ENCODE measurements at regions of chr20 and their contacts with region 1.

Region 1: DNA sequence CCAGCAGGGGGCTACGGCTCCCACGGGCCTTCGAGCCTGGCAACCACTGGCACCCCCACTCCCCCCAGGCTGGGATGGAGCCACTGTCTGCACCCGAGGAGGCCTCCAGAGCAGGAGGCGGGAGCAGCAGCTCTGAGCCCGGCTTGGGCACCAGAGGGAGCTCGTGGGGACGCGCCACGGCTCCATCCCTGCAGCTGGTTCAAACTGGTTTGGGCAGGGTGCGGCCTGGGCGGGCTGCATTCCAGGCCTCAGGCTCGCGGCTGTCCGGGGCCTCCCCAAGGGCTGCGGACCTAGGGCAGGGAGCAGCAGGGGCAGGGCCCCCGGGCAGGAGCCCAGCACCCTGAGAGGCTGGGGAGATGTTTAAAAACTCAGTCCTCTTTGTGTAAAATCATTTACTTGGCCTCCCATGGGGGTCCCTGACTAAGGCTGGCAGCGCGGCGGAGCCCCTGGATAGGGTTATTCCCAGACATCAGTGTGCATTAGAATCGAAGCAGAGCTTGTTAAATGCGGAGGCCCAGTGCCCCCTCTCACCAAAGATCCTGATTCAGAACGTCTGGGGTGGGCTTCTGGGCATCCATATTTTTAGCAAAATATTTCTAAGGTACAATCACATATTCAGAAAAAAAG is 4.1 kb upstream of the BCAS4 start:
- DNase-seq: no peak
- H3K4me3 ChIP-seq: no peak overlapping the region
- CTCF ChIP-seq: peak; percentile 99

Region 2: DNA sequence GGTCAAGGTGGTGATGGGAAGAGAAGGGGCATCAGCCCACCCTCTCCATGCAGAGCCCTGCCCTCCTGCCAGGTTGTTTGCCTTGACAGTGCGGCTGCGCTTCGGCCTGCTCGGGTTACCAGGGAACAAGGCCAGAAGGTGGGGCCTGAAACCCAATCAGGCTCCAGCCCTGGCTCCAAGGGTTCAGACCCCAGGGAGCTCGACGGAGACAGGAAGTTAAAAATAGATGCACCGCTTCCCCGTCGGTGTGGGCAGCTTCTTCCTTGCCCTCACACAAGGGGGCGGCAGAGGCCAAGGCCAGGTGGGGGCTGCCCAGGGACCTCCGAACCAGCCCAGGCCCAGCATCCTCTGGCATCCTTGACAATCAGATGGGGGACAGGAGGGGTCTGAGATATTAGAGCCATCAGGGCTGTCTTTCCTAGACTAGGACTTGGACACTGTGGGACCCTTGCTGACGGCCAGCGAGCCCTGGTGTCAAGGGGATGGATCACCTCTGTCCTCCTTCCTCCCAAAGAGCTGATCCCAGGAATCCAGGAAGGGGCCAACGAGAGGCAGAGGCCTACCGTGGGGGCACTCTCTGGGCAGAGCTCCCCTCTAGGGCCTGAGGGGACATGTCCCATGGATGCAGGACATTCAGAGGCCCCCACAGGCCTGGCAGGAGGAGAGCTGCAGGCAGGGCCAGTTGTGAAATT is 164.6 kb before region 1 on chr20:
- CTCF ChIA-PET with region 1: interaction called, 17 read pairs
- POLR2A ChIA-PET with region 1: no interaction called
- DNase-seq: no peak
- H3K4me3 ChIP-seq: no peak overlapping the region
- CTCF ChIP-seq: peak; percentile 71

Region 3: DNA sequence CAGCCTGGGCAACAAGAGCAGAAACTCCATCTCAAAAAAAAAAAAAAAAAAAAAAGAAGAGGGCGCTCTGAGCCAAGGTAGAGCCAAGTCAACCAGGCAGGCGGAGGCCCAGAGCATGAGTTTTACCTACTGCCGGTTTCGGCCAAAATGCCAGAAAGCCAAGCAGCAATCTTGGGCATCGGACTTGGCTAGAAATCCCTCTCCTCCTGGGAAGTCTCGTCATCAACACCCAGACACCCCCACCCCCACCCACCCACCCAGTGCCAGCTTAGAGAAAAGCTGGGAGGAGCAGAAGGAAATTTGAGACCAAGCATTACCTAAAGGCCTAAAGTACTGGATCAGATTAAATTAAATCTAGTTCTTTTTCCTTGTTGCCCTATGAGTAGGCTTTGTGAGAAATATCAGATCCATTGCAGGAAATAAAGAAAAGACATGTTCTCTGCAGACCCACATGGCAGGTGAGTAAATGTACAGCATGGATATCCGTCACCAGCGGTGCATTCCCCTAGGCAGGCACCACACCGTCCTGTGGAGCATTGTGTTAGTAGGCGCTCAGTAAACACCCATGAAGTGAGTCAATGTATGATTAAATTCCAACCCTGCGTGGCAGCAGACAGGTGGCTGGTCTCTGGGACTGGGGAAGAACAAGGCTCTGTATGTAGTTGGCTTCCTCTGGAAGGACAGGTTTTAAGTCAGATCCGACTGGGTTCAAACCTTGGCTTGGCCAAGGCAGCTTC is 120.5 kb before region 1 on chr20:
- CTCF ChIA-PET with region 1: no interaction called
- POLR2A ChIA-PET with region 1: no interaction called
- DNase-seq: no peak
- H3K4me3 ChIP-seq: no peak overlapping the region
- CTCF ChIP-seq: no peak

Region 4: DNA sequence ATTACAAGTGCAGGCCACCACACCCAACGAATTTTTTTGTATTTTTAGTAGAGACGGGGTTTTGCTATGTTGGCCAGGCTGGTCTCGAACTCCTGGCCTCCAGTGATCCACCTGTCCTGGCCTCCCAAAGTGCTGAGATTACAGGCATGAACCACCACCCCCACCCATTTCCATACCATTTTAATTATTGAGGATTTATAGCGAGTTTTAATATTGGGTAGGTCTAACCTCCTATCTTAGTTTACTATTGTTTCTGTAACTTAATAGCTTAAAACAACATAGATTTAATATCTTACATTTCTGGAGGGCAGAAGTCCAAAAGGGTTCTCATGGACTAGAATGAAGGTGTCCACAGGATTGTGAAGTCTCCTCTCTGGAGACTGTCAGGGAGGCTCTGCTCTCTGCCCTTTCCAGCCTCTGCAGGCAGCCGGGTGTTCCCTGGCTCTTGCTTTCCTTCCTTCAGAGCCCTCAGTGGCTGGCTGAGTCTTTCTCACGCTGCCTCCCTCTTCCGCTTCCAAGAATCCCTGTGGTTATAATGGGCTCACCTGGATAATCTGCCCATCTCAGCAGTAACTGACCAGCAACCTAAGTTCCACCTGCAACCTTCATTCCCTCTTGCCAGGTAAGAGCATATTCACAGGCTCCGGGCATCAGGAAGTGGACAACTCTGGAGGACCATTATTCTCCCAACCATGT is 14.5 kb before region 1 on chr20:
- CTCF ChIA-PET with region 1: interaction called, 122 read pairs
- POLR2A ChIA-PET with region 1: no interaction called
- DNase-seq: no peak
- H3K4me3 ChIP-seq: no peak overlapping the region
- CTCF ChIP-seq: no peak

Region 5: GRCh38 chr20:50824193-50824632 is 33.4 kb after region 1 on chr20:
- CTCF ChIA-PET with region 1: interaction called, 20 read pairs
- POLR2A ChIA-PET with region 1: no interaction called
- DNase-seq: no peak
- H3K4me3 ChIP-seq: no peak overlapping the region
- CTCF ChIP-seq: no peak

Region 6: GRCh38 chr20:50929299-50930138 is 138.8 kb after region 1 on chr20:
- CTCF ChIA-PET with region 1: interaction called, 332 read pairs
- POLR2A ChIA-PET with region 1: interaction called, 18 read pairs
- DNase-seq: peak; percentile 78
- H3K4me3 ChIP-seq: peak overlapping the region; percentile 79
- CTCF ChIP-seq: peak; percentile 97

Region 7: GRCh38 chr20:50967586-50967985 is 176.8 kb after region 1 on chr20:
- CTCF ChIA-PET with region 1: interaction called, 10 read pairs
- POLR2A ChIA-PET with region 1: no interaction called
- DNase-seq: no peak
- H3K4me3 ChIP-seq: no peak overlapping the region
- CTCF ChIP-seq: no peak

Region 8: GRCh38 chr20:50992733-50993457 is 202.1 kb after region 1 on chr20:
- CTCF ChIA-PET with region 1: interaction called, 42 read pairs
- POLR2A ChIA-PET with region 1: no interaction called
- DNase-seq: no peak
- H3K4me3 ChIP-seq: no peak overlapping the region
- CTCF ChIP-seq: peak; percentile 57